ENCODE measurements at regions of chr4 and their contacts with region 1.

Region 1: GRCh38 chr4:125762537-125762936 is 447.8 kb downstream of the FAT4 start:
- DNase-seq: no peak
- ATAC-seq: no peak
- H3K4me3 Mint-ChIP-seq: no peak overlapping the region
- H3K27ac Mint-ChIP-seq: no peak overlapping the region
- H3K4me1 Mint-ChIP-seq: no peaks in the 10 kb centered on the region
- H3K27me3 Mint-ChIP-seq: no peaks in the 10 kb centered on the region

Region 2: GRCh38 chr4:125681240-125681639 is 81.3 kb before region 1 on chr4:
- CTCF ChIA-PET with region 1: no interaction called
- POLR2A ChIA-PET with region 1: no interaction called
- intact Hi-C with region 1: no loop called
- DNase-seq: no peak
- ATAC-seq: no peak
- H3K4me3 Mint-ChIP-seq: no peak overlapping the region
- H3K27ac Mint-ChIP-seq: no peak overlapping the region
- H3K4me1 Mint-ChIP-seq: no peaks in the 10 kb centered on the region
- H3K27me3 Mint-ChIP-seq: no peaks in the 10 kb centered on the region

Region 3: GRCh38 chr4:125750399-125750798 is 12.1 kb before region 1 on chr4:
- CTCF ChIA-PET with region 1: no interaction called
- POLR2A ChIA-PET with region 1: interaction called, 10 read pairs
- intact Hi-C with region 1: no loop called
- DNase-seq: no peak
- ATAC-seq: no peak
- H3K4me3 Mint-ChIP-seq: no peak overlapping the region
- H3K27ac Mint-ChIP-seq: no peak overlapping the region
- H3K4me1 Mint-ChIP-seq: no peaks in the 10 kb centered on the region
- H3K27me3 Mint-ChIP-seq: no peaks in the 10 kb centered on the region